ENCODE measurements at regions of chr1 and their contacts with region 1.

Region 1: GRCh38 chr1:117674521-117675397 is 68.9 kb downstream of the TENT5C start:
- DNase-seq: peak; percentile 41
- ATAC-seq: peak; percentile 80
- H3K4me3 Mint-ChIP-seq: no peak overlapping the region
- H3K27ac Mint-ChIP-seq: no peak overlapping the region
- H3K4me1 Mint-ChIP-seq: peaks cover 56% of the 10 kb centered on the region
- H3K27me3 Mint-ChIP-seq: no peaks in the 10 kb centered on the region
- CTCF ChIP-seq: no peak

Region 2: DNA sequence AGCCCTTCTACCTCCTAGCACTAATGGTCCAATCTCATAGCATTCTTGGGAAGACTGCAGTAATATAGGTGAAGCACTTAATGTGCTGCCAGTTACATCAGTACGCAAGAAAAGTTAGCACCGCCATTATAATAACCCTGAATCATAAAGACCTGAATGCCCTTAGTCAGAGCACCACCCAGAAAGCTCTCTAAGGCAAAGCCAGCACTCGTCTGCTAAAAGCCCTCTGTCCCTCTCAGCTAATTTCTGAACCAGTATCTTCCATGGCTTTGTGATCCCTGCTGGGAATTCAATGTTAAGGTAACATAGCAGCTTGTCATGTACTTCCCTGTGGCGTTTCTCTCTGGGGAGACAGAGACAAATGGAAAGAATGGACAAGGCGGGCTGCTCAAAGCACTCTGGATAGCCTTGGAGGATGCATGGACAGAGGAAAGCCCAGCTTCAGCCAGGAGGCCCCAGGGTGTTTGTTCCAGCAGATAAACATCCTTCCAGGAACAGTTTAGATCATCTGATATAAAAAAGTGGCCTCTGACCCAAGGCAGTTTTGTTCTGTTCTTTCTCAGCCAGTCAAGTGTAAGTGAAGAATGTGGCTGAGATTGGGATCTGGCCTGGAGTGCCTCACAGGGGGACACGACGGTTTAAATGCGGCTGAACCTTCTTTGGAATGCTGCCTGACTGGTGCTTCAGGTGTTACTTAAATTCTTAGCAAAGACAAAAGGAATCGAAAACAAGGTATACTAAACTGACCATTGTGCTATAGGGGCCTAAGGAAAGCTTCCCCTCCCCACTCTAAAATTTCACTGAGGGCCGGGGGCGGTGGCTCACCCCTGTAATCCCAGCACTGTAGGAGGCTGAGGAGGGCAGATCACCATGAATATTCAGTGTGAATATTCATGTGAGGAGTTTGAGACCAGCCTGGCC is 406.0 kb before region 1 on chr1:
- CTCF ChIA-PET with region 1: no interaction called
- POLR2A ChIA-PET with region 1: no interaction called
- intact Hi-C with region 1: no loop called
- DNase-seq: no peak
- ATAC-seq: no peak
- H3K4me3 Mint-ChIP-seq: no peak overlapping the region
- H3K27ac Mint-ChIP-seq: no peak overlapping the region
- H3K4me1 Mint-ChIP-seq: no peaks in the 10 kb centered on the region
- H3K27me3 Mint-ChIP-seq: peaks cover 14% of the 10 kb centered on the region
- CTCF ChIP-seq: no peak

Region 3: DNA sequence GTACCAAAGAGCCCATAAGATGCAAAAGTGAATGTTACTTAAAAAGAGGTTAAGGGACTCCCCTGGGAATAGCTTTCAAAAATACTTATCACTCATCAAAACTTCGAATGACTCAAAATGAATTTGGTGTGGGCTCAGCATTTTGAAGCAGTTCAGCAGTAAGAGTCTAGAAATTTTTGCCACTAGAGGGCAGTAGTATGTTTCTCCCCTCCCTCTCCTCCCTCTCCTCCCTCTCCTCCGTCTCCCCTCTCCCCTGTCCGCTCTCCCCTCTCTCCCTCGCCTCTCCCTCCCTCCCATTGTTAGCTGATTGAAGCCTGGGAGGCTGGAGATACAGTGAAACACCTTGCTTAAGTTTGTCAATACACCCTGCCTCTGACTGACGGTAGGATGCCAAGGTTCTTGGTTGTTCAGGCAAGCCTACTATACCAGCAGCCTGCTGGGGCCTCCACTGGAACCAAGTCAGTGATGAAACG is 139.7 kb before region 1 on chr1:
- CTCF ChIA-PET with region 1: interaction called, 211 read pairs
- POLR2A ChIA-PET with region 1: interaction called, 15 read pairs
- intact Hi-C with region 1: loop called (anchors 1 kb)
- DNase-seq: peak; percentile 26
- ATAC-seq: peak; percentile 85
- H3K4me3 Mint-ChIP-seq: peak overlapping the region; percentile 16
- H3K27ac Mint-ChIP-seq: no peak overlapping the region
- H3K4me1 Mint-ChIP-seq: peaks cover 2% of the 10 kb centered on the region
- H3K27me3 Mint-ChIP-seq: no peaks in the 10 kb centered on the region
- CTCF ChIP-seq: no peak

Region 4: GRCh38 chr1:117612517-117613248 is 62.1 kb before region 1 on chr1:
- CTCF ChIA-PET with region 1: interaction called, 60 read pairs
- POLR2A ChIA-PET with region 1: interaction called, 1,269 read pairs
- intact Hi-C with region 1: no loop called
- DNase-seq: peak; percentile 15
- ATAC-seq: peak; percentile 38
- H3K4me3 Mint-ChIP-seq: peak overlapping the region; percentile 56
- H3K27ac Mint-ChIP-seq: peak overlapping the region; percentile 81
- H3K4me1 Mint-ChIP-seq: peaks cover 98% of the 10 kb centered on the region
- H3K27me3 Mint-ChIP-seq: no peaks in the 10 kb centered on the region
- CTCF ChIP-seq: no peak

Region 5: GRCh38 chr1:117638759-117639158 is 36.0 kb before region 1 on chr1:
- CTCF ChIA-PET with region 1: interaction called, 10 read pairs
- POLR2A ChIA-PET with region 1: interaction called, 1,269 read pairs
- intact Hi-C with region 1: loop called (anchors 5 kb)
- DNase-seq: no peak
- ATAC-seq: no peak
- H3K4me3 Mint-ChIP-seq: no peak overlapping the region
- H3K27ac Mint-ChIP-seq: no peak overlapping the region
- H3K4me1 Mint-ChIP-seq: peaks cover 56% of the 10 kb centered on the region
- H3K27me3 Mint-ChIP-seq: no peaks in the 10 kb centered on the region
- CTCF ChIP-seq: no peak

Region 6: GRCh38 chr1:117758444-117759316 is 83.9 kb after region 1 on chr1:
- CTCF ChIA-PET with region 1: interaction called, 41 read pairs
- POLR2A ChIA-PET with region 1: interaction called, 3 read pairs
- intact Hi-C with region 1: loop called (anchors 1 kb)
- DNase-seq: peak; percentile 45
- ATAC-seq: peak; percentile 92
- H3K4me3 Mint-ChIP-seq: peak overlapping the region; percentile 73
- H3K27ac Mint-ChIP-seq: no peak overlapping the region
- H3K4me1 Mint-ChIP-seq: peaks cover 12% of the 10 kb centered on the region
- H3K27me3 Mint-ChIP-seq: peaks cover 15% of the 10 kb centered on the region
- CTCF ChIP-seq: peak; percentile 45

Region 7: DNA sequence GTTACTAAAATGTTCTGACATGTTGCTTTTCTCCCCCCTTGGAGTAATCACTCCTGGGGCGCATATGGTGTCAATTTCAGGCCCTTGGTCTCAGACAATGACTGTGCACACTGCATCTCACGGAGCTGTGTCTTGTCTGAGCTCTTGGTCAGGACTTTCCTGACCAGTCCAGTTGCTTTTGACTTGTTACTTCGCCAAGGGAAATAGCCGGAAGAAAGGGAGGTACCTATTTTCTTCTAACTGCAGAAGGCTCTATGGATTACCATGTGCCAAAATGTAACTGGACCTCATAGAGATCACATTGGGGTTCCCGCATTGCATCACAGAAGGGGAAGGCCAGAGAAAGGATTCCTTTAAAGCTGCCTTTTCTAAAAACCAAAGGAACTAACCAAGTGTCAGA is 441.6 kb after region 1 on chr1:
- CTCF ChIA-PET with region 1: no interaction called
- POLR2A ChIA-PET with region 1: no interaction called
- intact Hi-C with region 1: no loop called
- DNase-seq: no peak
- ATAC-seq: no peak
- H3K4me3 Mint-ChIP-seq: no peak overlapping the region
- H3K27ac Mint-ChIP-seq: no peak overlapping the region
- H3K4me1 Mint-ChIP-seq: no peaks in the 10 kb centered on the region
- H3K27me3 Mint-ChIP-seq: no peaks in the 10 kb centered on the region
- CTCF ChIP-seq: no peak